ENCODE measurements at regions of chr5 and their contacts with region 1.

Region 1: DNA sequence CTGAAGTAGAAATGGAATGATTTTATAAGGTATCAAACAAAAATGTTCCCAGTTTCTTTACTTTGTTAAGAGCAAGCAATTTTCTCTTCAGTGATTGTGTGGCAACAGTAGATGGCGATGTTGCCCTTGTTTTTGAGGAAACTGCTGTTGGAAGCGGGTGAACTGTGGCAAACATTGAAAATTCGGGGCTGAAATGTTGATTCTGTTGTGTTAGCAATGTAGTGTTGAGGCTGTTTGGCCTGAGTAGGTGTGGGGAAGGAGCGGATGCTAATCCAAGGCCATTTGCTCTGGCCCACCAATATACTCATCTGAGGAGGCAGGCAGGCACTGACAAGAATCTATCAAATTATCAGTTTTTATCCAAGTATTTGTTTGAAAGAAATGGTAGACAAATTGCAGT is 129.8 kb downstream of the SLC12A2 start:
- DNase-seq: peak; percentile 61
- ATAC-seq: peak; percentile 76
- H3K4me3 ChIP-seq: no peak overlapping the region
- H3K27ac ChIP-seq: no peak overlapping the region
- H3K4me1 ChIP-seq: no peaks in the 10 kb centered on the region
- H3K27me3 ChIP-seq: no peaks in the 10 kb centered on the region
- CTCF ChIP-seq: peak; percentile 66 to 87 (median 78); a peak in 5 of 6 replicates
- POLR2A ChIP-seq: no peak
- RAD21 ChIP-seq: peak; percentile 92

Region 2: GRCh38 chr5:128498844-128499455 is 285.6 kb after region 1 on chr5:
- CTCF ChIA-PET with region 1: interaction called, 18 read pairs
- POLR2A ChIA-PET with region 1: no interaction called
- RAD21 ChIA-PET with region 1: interaction called, 4 to 5 read pairs
- intact Hi-C with region 1: loop called (anchors 1 kb)
- DNase-seq: peak; percentile 40
- ATAC-seq: peak; percentile 70
- H3K4me3 ChIP-seq: no peak overlapping the region
- H3K27ac ChIP-seq: no peak overlapping the region
- H3K4me1 ChIP-seq: no peaks in the 10 kb centered on the region
- H3K27me3 ChIP-seq: no peaks in the 10 kb centered on the region
- CTCF ChIP-seq: peak; percentile 47 to 66 (median 65); a peak in 5 of 6 replicates
- POLR2A ChIP-seq: no peak
- RAD21 ChIP-seq: peak; percentile 81

Region 3: GRCh38 chr5:128844354-128844923 is 631.1 kb after region 1 on chr5:
- CTCF ChIA-PET with region 1: interaction called, 4 read pairs
- POLR2A ChIA-PET with region 1: no interaction called
- RAD21 ChIA-PET with region 1: no interaction called
- intact Hi-C with region 1: loop called (anchors 1 kb)
- DNase-seq: no peak
- ATAC-seq: no peak
- H3K4me3 ChIP-seq: no peak overlapping the region
- H3K27ac ChIP-seq: no peak overlapping the region
- H3K4me1 ChIP-seq: no peaks in the 10 kb centered on the region
- H3K27me3 ChIP-seq: no peaks in the 10 kb centered on the region
- CTCF ChIP-seq: peak in 2 of 3 experiments; percentile 35 to 46; a peak in 3 of 6 replicates
- POLR2A ChIP-seq: no peak
- RAD21 ChIP-seq: peak; percentile 68

Region 4: DNA sequence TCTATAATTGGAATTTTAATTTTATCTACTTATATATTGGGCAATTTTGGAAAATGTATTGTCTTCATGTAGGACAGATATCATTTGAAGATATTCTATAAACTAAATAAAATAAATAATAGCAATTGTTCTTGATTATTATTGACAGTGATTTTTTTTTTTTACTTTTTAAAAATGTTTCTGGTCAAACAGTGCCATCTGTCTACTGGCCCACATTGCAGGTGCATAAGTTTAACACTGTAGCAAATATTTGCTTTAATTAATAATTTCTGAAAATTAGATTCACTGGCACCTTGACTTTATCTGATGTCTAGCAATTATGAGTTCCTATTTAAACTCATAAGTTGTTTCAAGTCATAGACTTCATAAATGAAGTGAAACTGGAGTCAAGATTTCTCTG is 840.1 kb after region 1 on chr5:
- CTCF ChIA-PET with region 1: no interaction called
- POLR2A ChIA-PET with region 1: no interaction called
- RAD21 ChIA-PET with region 1: no interaction called
- intact Hi-C with region 1: loop called (anchors 10 kb)
- DNase-seq: no peak
- ATAC-seq: no peak
- H3K4me3 ChIP-seq: no peak overlapping the region
- H3K27ac ChIP-seq: no peak overlapping the region
- H3K4me1 ChIP-seq: no peaks in the 10 kb centered on the region
- H3K27me3 ChIP-seq: no peaks in the 10 kb centered on the region
- CTCF ChIP-seq: peak in 1 of 3 experiments; percentile 37; a peak in 2 of 6 replicates
- POLR2A ChIP-seq: no peak
- RAD21 ChIP-seq: peak; percentile 56

Measured in HCT116 (cell line).